Activated naive CD4-positive, alpha-beta T cell treated with anti-CD3 and anti-CD28 coated beads, Interleukin-2, amount 10 ng/mL, durations not matched to agents 7 days and 5 days (primary cell): ENCODE measurements at regions of chr17 and their contacts with region 1.

Region 1: DNA sequence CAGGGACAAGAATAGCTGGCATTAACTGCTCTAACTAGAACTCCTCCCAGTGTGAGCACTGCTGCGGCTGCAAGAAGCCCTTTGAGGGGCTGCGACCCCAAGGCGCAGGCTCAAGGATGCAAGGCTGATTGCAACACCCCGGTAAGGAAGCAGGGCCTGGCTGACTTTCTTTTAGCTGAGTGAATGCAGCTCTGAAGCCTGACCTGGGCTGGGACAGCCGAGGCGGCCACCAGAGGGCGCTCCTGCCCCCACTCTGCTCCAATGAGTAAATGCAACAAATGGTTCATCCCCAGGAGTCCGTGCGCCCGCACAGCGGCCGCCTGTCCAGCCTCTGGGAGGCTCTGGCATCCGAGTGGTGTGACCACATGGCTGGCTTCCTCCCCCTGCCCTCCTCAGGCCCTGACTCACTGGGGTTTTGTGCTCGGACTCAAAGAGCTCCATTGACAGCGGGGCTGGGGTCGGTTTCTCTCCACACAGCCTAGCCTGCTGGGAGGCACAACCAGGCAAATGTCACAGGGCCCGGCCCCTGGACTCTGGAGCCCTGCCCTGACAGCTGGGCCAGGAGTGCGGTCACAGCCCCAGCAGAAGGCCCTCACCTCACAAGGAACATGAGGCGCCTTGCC is at the start of gene SMIM5:
- DNase-seq: peak; percentile 91
- H3K4me3 Mint-ChIP-seq: no peak within 1 kb of the TSS
- H3K27ac Mint-ChIP-seq: no peak within 1 kb of the TSS
- H3K4me1 Mint-ChIP-seq: no peaks in the 10 kb centered on the region
- H3K27me3 Mint-ChIP-seq: no peaks in the 10 kb centered on the region

Region 2: DNA sequence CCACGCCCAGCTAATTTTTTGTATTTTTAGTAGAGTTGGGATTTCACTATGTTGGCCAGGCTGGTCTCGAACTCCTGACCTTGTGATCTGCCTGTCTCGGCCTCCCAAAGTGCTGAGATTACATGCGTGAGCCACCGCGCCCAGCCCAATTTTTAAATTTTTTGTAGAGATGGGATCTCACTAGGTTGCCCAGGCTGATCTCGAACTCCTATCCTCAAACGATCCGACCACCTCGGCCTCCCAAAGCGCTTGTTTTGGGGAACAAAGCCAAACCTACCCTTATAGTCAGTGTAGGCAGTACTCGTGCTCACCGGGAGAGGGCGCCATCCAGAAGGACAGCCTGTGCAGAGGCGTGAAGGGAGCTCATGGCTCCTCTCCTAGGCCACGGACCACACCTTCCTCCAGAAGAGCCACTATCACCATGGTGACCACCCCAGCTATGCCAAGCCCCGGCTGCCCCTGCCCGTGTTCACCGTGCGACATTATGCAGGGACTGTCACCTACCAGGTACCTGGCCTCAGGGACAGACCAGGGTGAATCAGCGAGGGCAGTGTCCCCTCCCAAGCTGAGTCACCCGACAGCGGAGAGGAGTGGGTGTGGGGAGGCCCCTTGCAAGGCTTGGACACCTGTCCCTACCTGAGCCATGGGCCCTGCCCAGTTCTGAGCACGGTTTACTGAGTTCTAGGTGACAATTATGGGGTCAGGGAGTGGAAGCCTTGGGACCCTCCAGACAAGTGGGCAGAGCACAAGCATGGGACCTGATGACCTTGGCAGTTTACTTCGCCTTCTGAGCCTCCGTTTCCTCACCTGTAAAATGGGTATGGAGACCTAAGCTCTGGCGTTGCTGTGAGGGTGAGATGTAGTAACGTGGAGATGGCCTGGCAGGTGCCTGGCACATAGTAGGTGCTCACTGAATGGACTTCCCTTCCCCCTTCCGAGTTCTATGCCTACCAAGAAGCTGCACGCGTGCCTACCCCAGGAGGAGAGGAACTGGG is 31.6 kb before region 1 on chr17:
- CTCF ChIA-PET with region 1: interaction called, 12 read pairs
- DNase-seq: peak; percentile 78
- H3K4me3 Mint-ChIP-seq: no peak overlapping the region
- H3K27ac Mint-ChIP-seq: no peak overlapping the region
- H3K4me1 Mint-ChIP-seq: no peaks in the 10 kb centered on the region
- H3K27me3 Mint-ChIP-seq: peaks cover 6% of the 10 kb centered on the region

Region 3: GRCh38 chr17:75645889-75646637 is 13.1 kb after region 1 on chr17:
- CTCF ChIA-PET with region 1: interaction called, 101 read pairs
- DNase-seq: peak; percentile 39
- H3K4me3 Mint-ChIP-seq: no peak overlapping the region
- H3K27ac Mint-ChIP-seq: peak overlapping the region; percentile 9
- H3K4me1 Mint-ChIP-seq: peaks cover 15% of the 10 kb centered on the region
- H3K27me3 Mint-ChIP-seq: no peaks in the 10 kb centered on the region

Region 4: GRCh38 chr17:75667021-75667790 is 34.2 kb after region 1 on chr17 and contains the starts of genes RECQL5 and SAP30BP:
- CTCF ChIA-PET with region 1: interaction called, 11 read pairs
- DNase-seq: peak; percentile 99
- H3K4me3 Mint-ChIP-seq: no peak within 1 kb of the TSS
- H3K27ac Mint-ChIP-seq: peak within 1 kb of the TSS; percentile 80
- H3K4me1 Mint-ChIP-seq: peaks cover 23% of the 10 kb centered on the region
- H3K27me3 Mint-ChIP-seq: no peaks in the 10 kb centered on the region

Region 5: GRCh38 chr17:75738218-75738802 is 105.3 kb after region 1 on chr17:
- CTCF ChIA-PET with region 1: interaction called, 13 read pairs
- DNase-seq: peak; percentile 48
- H3K4me3 Mint-ChIP-seq: no peak overlapping the region
- H3K27ac Mint-ChIP-seq: peak overlapping the region; percentile 39
- H3K4me1 Mint-ChIP-seq: peaks cover 9% of the 10 kb centered on the region
- H3K27me3 Mint-ChIP-seq: peaks cover 6% of the 10 kb centered on the region

Region 6: DNA sequence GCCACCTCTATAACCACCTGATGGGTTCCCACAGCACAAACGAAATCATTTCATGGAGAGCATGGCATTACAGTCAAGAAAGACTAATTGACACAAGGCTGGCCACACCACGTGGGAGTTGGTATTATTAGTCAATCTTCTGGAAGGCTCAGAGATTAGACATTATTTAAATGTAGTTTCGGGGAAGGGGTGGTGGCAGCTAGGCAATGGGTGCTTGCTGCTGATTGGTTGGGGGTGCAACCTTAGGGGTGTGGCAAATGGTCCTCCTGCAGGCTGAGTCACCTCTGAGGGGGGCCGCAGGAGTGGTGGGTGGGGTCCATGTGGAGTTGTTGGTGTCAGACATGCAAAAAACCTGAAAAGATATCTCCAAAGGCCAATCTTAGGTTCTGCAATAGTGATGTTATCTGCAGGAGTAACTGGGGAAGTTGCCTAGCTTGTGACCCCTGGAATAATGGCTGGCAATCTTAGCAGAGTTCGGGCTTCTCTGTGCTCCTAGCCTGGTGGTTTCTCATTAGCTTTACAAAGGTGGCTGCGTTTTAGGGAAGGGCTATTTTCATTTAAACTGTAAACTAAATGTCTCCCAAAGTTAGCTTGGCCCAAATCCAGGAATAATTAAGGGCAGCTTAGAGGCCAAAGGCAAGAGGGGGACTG is 350.7 kb after region 1 on chr17:
- CTCF ChIA-PET with region 1: no interaction called
- DNase-seq: no peak
- H3K4me3 Mint-ChIP-seq: no peak overlapping the region
- H3K27ac Mint-ChIP-seq: no peak overlapping the region
- H3K4me1 Mint-ChIP-seq: peaks cover 18% of the 10 kb centered on the region
- H3K27me3 Mint-ChIP-seq: no peaks in the 10 kb centered on the region